Right lobe of liver (tissue), 6 donors: ENCODE measurements at regions of chrX and their contacts with region 1.

Region 1: GRCh38 chrX:150772150-150772970 is 79.2 kb downstream of the MTMR1 start:
- DNase-seq: peak; percentile 81 to 83 (median 83)
- ATAC-seq: peak; percentile 85 to 93 (median 89)
- H3K4me3 ChIP-seq: no peak overlapping the region
- H3K27ac ChIP-seq: no peak overlapping the region
- H3K4me1 ChIP-seq: no peaks in the 10 kb centered on the region
- H3K27me3 ChIP-seq: no peaks in the 10 kb centered on the region
- CTCF ChIP-seq: peak; percentile 69 to 82 (median 74)
- POLR2A ChIP-seq: no peak

Region 2: GRCh38 chrX:151082076-151082948 is 310.0 kb after region 1 on chrX:
- intact Hi-C with region 1: loop called (anchors 5 kb)
- DNase-seq: peak; percentile 66 to 73 (median 71)
- ATAC-seq: peak; percentile 92 to 95 (median 94)
- H3K4me3 ChIP-seq: peak overlapping the region in 1 of 3 donors; percentile 38
- H3K27ac ChIP-seq: no peak overlapping the region
- H3K4me1 ChIP-seq: peaks cover 0 to 17% (median 2%) of the 10 kb centered on the region in 4 donors
- H3K27me3 ChIP-seq: no peaks in the 10 kb centered on the region
- CTCF ChIP-seq: peak; percentile 89 to 96 (median 91)
- POLR2A ChIP-seq: no peak